IMR-90 (cell line): ENCODE measurements at regions of chr4 and their contacts with region 1.

Region 1: DNA sequence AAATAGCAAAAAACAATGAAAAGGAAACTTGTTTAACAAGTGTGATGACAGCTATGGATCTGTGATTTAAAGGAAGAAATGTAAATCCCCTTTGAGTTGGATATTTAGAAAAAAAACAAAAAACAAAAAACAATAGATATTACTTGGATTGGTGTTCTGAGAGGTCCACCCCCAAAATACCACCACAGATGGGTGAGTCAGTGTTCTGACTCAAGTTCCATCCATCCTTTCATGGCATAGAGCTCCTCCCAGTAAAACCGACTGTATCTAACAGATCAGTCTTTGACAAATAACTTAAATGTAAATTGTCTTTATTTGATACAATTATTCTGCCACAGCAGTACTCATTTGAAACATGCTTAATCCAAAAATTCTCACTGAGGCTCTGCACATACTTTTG is 27.4 kb downstream of the TMPRSS11B start:
- DNase-seq: no peak
- ATAC-seq: no peak
- H3K4me3 ChIP-seq: no peak overlapping the region
- H3K27ac ChIP-seq: no peak overlapping the region
- H3K4me1 ChIP-seq: no peaks in the 10 kb centered on the region
- H3K27me3 ChIP-seq: no peaks in the 10 kb centered on the region
- CTCF ChIP-seq: no peak
- POLR2A ChIP-seq: no peak
- RAD21 ChIP-seq: no peak

Region 2: DNA sequence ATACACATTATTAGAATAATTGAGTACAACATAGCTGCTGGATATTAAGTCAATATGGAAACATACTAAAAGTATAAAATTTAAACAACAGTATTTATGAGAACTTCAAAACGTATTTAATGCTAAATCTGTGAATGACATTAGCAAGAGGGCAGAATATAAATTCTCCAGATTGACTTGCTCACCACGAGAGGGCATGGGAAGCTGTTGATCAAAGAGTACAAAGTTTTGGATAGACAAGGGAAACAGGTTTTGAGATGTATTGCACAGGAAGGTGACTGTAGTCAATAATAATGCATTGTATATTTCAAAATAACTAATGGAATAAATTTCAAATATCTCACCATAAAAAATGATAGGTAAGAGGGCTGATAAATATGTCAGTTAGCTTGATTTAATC is 1440.9 kb before region 1 on chr4:
- CTCF ChIA-PET with region 1: no interaction called
- POLR2A ChIA-PET with region 1: no interaction called
- dilution Hi-C with region 1: no loop called
- in situ Hi-C with region 1: no loop called
- intact Hi-C with region 1: loop called (anchors 5 kb)
- DNase-seq: no peak
- ATAC-seq: no peak
- H3K4me3 ChIP-seq: no peak overlapping the region
- H3K27ac ChIP-seq: no peak overlapping the region
- H3K4me1 ChIP-seq: no peaks in the 10 kb centered on the region
- H3K27me3 ChIP-seq: no peaks in the 10 kb centered on the region
- CTCF ChIP-seq: no peak
- POLR2A ChIP-seq: no peak
- RAD21 ChIP-seq: no peak